GM12878 (cell line): ENCODE measurements at regions of chr4 and their contacts with region 1.

Region 1: GRCh38 chr4:143248827-143249226 is 64.1 kb downstream of the USP38 start:
- DNase-seq: no peak
- ATAC-seq: no peak
- H3K4me3 ChIP-seq: no peak overlapping the region
- H3K27ac ChIP-seq: no peak overlapping the region
- H3K4me1 ChIP-seq: no peaks in the 10 kb centered on the region
- H3K27me3 ChIP-seq: no peaks in the 10 kb centered on the region
- CTCF ChIP-seq: no peak
- EP300 ChIP-seq: no peak
- POLR2A ChIP-seq: no peak
- RAD21 ChIP-seq: no peak

Region 2: DNA sequence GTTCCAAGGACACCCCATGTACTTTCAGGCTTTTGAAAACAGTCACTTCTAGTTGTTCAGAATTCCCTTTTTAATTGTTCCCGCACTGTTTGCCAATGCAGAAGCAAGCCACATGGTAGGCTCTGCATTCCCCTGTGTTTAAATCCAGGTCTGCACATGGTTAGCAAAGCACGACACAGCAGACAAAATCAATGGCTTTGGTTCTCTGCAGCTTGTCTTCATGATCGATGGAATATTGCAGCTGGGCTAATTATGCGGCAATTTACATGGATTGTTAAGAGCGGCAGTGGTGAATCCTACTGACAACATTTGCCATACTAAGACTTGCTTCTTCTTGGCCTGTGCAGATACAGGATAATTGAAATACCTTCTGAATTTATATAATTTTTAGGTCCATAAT is 382.1 kb before region 1 on chr4:
- CTCF ChIA-PET with region 1: no interaction called
- POLR2A ChIA-PET with region 1: no interaction called
- RAD21 ChIA-PET with region 1: no interaction called
- SMC1A ChIA-PET with region 1: no interaction called
- in situ Hi-C with region 1: no loop called
- intact Hi-C with region 1: no loop called
- DNase-seq: no peak
- ATAC-seq: no peak
- H3K4me3 ChIP-seq: no peak overlapping the region
- H3K27ac ChIP-seq: no peak overlapping the region
- H3K4me1 ChIP-seq: no peaks in the 10 kb centered on the region
- H3K27me3 ChIP-seq: no peaks in the 10 kb centered on the region
- CTCF ChIP-seq: no peak
- EP300 ChIP-seq: no peak
- POLR2A ChIP-seq: no peak
- RAD21 ChIP-seq: no peak

Region 3: GRCh38 chr4:143230683-143231082 is 18.1 kb before region 1 on chr4:
- CTCF ChIA-PET with region 1: no interaction called
- POLR2A ChIA-PET with region 1: no interaction called
- RAD21 ChIA-PET with region 1: no interaction called
- SMC1A ChIA-PET with region 1: no interaction called
- in situ Hi-C with region 1: no loop called
- intact Hi-C with region 1: no loop called
- DNase-seq: no peak
- ATAC-seq: peak; percentile 84
- H3K4me3 ChIP-seq: no peak overlapping the region
- H3K27ac ChIP-seq: no peak overlapping the region
- H3K4me1 ChIP-seq: no peaks in the 10 kb centered on the region
- H3K27me3 ChIP-seq: no peaks in the 10 kb centered on the region
- CTCF ChIP-seq: no peak
- EP300 ChIP-seq: no peak
- POLR2A ChIP-seq: no peak
- RAD21 ChIP-seq: no peak

Region 4: DNA sequence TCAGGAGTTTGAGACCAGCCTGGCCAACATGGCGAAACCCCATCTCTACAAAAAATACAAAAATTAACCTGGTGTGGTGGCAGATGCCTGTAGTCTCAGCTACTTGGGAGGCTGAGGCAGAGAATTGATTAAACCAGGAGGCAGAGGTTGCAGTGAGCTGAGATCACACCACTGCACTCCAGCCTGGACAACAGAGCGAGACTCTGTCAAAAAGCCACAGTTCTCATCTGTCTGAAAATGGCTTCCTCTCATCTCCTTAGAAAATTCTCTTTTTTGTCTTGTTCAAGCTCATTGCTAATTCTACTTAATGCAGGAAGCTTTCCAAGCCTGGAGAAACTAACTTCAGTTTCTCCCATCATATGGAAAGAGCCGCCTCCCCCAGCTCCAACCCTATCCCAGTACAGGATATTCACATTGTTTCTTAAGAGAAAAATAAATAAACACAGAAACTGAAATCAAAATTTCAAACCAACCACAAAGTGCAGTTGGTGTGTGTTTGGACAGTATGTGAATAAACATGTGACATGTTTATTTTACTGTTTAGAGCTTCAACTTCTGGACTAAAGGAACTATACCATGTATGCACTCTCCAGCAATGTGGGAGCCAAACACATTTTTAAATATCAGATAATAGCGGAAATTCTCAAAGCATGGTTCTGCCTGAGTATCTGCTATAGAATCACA is 32.8 kb after region 1 on chr4:
- CTCF ChIA-PET with region 1: no interaction called
- POLR2A ChIA-PET with region 1: interaction called, 10 read pairs
- RAD21 ChIA-PET with region 1: no interaction called
- SMC1A ChIA-PET with region 1: no interaction called
- in situ Hi-C with region 1: no loop called
- intact Hi-C with region 1: no loop called
- DNase-seq: no peak
- ATAC-seq: peak; percentile 49; the same call in 2 of the 3 replicates
- H3K4me3 ChIP-seq: no peak overlapping the region
- H3K27ac ChIP-seq: no peak overlapping the region
- H3K4me1 ChIP-seq: no peaks in the 10 kb centered on the region
- H3K27me3 ChIP-seq: no peaks in the 10 kb centered on the region
- CTCF ChIP-seq: no peak
- EP300 ChIP-seq: no peak
- POLR2A ChIP-seq: no peak
- RAD21 ChIP-seq: no peak